ENCODE measurements at regions of chr5 and their contacts with region 1.

Region 1: GRCh38 chr5:95075111-95075510 is 209.8 kb downstream of the MCTP1 start:
- DNase-seq: no peak
- H3K4me3 ChIP-seq: no peak overlapping the region
- H3K27ac ChIP-seq: no peak overlapping the region
- H3K4me1 ChIP-seq: peaks cover 28% of the 10 kb centered on the region
- H3K27me3 ChIP-seq: no peaks in the 10 kb centered on the region
- CTCF ChIP-seq: no peak

Region 2: GRCh38 chr5:95178046-95178651 is 103.0 kb after region 1 on chr5:
- CTCF ChIA-PET with region 1: interaction called, 5 read pairs
- POLR2A ChIA-PET with region 1: interaction called, 11 read pairs
- intact Hi-C with region 1: no loop called
- DNase-seq: peak; percentile 95
- H3K4me3 ChIP-seq: peak overlapping the region; percentile 9
- H3K27ac ChIP-seq: peak overlapping the region; percentile 74
- H3K4me1 ChIP-seq: peaks cover 26% of the 10 kb centered on the region
- H3K27me3 ChIP-seq: no peaks in the 10 kb centered on the region
- CTCF ChIP-seq: peak; percentile 72

Region 3: GRCh38 chr5:95219411-95219810 is 144.3 kb after region 1 on chr5:
- CTCF ChIA-PET with region 1: no interaction called
- POLR2A ChIA-PET with region 1: interaction called, 13 read pairs
- intact Hi-C with region 1: no loop called
- DNase-seq: no peak
- H3K4me3 ChIP-seq: no peak overlapping the region
- H3K27ac ChIP-seq: no peak overlapping the region
- H3K4me1 ChIP-seq: no peaks in the 10 kb centered on the region
- H3K27me3 ChIP-seq: no peaks in the 10 kb centered on the region
- CTCF ChIP-seq: no peak

Measured in A673 (cell line).